ENCODE measurements at regions of chr10 and their contacts with region 1.

Region 1: GRCh38 chr10:100986952-100987750 is at the starts of genes MRPL43 and TWNK:
- DNase-seq: peak; percentile 80
- H3K4me3 Mint-ChIP-seq: peak within 1 kb of the TSS; percentile 98
- H3K27ac Mint-ChIP-seq: peak within 1 kb of the TSS; percentile 85
- H3K4me1 Mint-ChIP-seq: peaks cover 24% of the 10 kb centered on the region
- H3K27me3 Mint-ChIP-seq: no peaks in the 10 kb centered on the region
- total RNA-seq, gene MRPL43: 61.5 and 63.2 TPM in 2 replicates
- total RNA-seq, gene TWNK: 41.1 and 42.3 TPM in 2 replicates

Region 2: GRCh38 chr10:100535715-100536353 is 451.3 kb before region 1 on chr10 and contains the start of gene HIF1AN:
- intact Hi-C with region 1: loop called (anchors 1 kb)
- DNase-seq: peak; percentile 90
- H3K4me3 Mint-ChIP-seq: no peak within 1 kb of the TSS
- H3K27ac Mint-ChIP-seq: no peak within 1 kb of the TSS
- H3K4me1 Mint-ChIP-seq: peaks cover 16% of the 10 kb centered on the region
- H3K27me3 Mint-ChIP-seq: no peaks in the 10 kb centered on the region
- total RNA-seq, gene HIF1AN: 46.5 and 54.1 TPM in 2 replicates

Region 3: GRCh38 chr10:100791369-100792058 is 195.6 kb before region 1 on chr10:
- intact Hi-C with region 1: no loop called
- DNase-seq: no peak
- H3K4me3 Mint-ChIP-seq: no peak overlapping the region
- H3K27ac Mint-ChIP-seq: no peak overlapping the region
- H3K4me1 Mint-ChIP-seq: no peaks in the 10 kb centered on the region
- H3K27me3 Mint-ChIP-seq: peaks cover 29% of the 10 kb centered on the region

Region 4: DNA sequence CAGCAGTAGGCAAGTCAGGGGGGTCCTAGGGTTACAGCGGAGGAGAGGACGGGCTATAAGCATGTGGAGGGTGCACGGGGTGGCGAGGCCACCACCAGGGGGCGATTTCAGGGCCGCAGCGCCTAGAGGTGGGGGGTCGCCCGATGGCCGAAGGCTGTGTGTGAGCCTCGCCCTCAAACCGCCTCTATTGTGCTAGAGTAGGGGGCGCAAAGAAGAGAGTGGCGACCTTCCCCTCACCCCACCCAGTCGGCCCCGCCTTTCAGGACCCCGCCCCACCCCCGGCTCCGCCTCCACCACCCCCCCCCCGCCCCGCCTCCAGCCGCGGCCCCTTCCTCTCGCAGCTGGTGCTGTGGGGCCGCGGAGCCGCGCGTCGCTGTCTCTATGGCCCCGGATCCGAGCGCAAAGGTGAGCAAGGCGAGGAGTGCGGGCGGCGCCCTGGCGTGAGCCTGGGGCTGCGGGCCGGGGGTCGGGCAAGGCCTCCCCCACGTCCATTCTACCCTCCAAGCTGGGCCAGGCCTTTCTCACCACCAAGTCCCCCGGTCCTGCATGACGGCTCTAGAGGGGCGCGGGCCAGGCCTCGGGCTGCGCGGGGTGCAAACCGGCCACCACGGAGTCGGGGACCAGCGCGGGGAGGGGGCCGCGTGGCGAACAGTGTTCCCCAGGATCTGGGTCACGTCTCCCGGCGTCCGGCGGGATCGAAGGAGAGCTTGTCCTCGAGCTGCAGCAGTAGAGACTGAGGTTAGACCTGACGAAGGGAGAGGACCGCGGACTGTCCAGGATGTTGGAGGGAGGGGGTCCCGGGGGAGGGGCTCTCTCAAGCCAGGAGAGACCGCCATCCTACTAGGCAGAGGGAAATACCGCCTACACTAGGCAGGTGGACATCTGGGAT is 17.7 kb before region 1 on chr10 and contains the start of gene SEMA4G:
- intact Hi-C with region 1: loop called (anchors 1 kb)
- DNase-seq: peak; percentile 15
- H3K4me3 Mint-ChIP-seq: peak within 1 kb of the TSS; percentile 66
- H3K27ac Mint-ChIP-seq: no peak within 1 kb of the TSS
- H3K4me1 Mint-ChIP-seq: peaks cover 18% of the 10 kb centered on the region
- H3K27me3 Mint-ChIP-seq: peaks cover 11% of the 10 kb centered on the region
- total RNA-seq, gene SEMA4G: 0.31 and 0.83 TPM in 2 replicates

Region 5: GRCh38 chr10:100998991-100999741 is 12.0 kb after region 1 on chr10:
- intact Hi-C with region 1: loop called (anchors 1 kb)
- DNase-seq: peak; percentile 77
- H3K4me3 Mint-ChIP-seq: peak overlapping the region; percentile 88
- H3K27ac Mint-ChIP-seq: peak overlapping the region; percentile 93
- H3K4me1 Mint-ChIP-seq: peaks cover 29% of the 10 kb centered on the region
- H3K27me3 Mint-ChIP-seq: peaks cover 4% of the 10 kb centered on the region